GM10248 (cell line): ENCODE measurements at regions of chr16 and their contacts with region 1.

Region 1: GRCh38 chr16:14658063-14658462 is 25.3 kb downstream of the BFAR start:
- DNase-seq: peak; percentile 48
- CTCF ChIP-seq: no peak

Region 2: GRCh38 chr16:13957197-13958078 is 700.6 kb before region 1 on chr16:
- CTCF ChIA-PET with region 1: no interaction called
- POLR2A ChIA-PET with region 1: no interaction called
- DNase-seq: peak; percentile 59
- CTCF ChIP-seq: no peak

Region 3: GRCh38 chr16:14562691-14563491 is 95.2 kb before region 1 on chr16:
- CTCF ChIA-PET with region 1: no interaction called
- POLR2A ChIA-PET with region 1: no interaction called
- DNase-seq: no peak
- CTCF ChIP-seq: no peak

Region 4: GRCh38 chr16:14641926-14642325 is 16.1 kb before region 1 on chr16:
- CTCF ChIA-PET with region 1: interaction called, 13 read pairs
- POLR2A ChIA-PET with region 1: no interaction called
- DNase-seq: no peak
- CTCF ChIP-seq: no peak

Region 5: DNA sequence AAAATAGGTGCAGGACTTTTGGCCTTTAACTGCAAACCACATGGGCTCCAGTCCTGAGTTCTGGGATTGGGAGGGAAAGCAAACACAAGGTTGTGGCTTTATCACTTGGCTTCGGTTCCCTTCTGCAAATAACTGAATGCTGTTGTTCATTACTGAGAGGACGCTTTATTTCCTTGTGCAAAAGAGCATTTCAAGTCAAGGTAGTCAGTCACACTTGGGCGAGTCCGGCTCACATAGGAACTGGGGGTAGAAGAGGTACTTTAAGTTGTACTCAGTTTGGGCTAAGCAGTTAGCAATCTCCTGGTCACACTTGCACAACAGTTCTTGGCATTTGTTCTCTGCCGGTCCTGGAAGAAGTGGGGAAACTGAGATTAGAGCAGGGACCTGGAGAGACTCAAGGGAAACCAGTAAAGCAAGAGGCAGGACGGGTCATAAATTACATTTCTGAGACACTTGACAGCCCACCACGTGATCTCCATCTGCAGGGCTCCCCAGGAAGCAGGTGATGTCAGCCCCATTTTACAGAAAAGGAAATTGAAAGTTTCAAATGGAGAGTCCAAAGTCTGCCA is 14.4 kb after region 1 on chr16:
- CTCF ChIA-PET with region 1: no interaction called
- POLR2A ChIA-PET with region 1: no interaction called
- DNase-seq: peak; percentile 77
- CTCF ChIP-seq: no peak